PC-3 (cell line): ENCODE measurements at regions of chr14 and their contacts with region 1.

Region 1: DNA sequence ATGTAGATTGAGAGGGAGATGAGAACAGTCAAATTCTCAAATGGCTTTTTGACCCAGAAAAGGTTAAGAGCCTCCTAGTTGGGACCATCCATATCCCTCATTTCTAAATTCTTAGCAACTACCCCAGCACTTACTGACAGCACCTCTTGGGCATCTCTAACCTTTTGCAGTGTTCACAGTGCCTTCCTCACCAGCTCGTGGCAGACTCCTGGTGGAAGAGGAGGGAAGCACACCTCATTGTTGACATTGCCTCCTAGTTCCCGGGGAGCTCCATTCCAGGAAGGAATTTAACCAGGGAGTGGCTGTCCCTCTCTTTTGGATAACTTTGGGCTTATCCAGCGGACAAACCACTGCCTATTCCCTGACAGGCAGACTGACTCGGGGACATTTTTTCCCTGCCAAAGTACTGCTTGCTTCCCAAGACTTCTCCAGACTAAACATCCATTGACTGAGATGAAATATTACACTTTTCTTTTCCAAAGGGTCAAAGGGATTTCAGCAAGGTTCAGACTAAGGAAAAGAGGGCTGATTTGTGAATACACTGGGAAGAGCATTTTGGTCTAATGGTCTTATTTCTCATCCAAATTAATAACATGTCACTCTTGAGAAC is 9.0 kb upstream of the OR6J1 start:
- DNase-seq: peak; percentile 93
- ATAC-seq: peak; percentile 62
- H3K4me3 ChIP-seq: no peak overlapping the region
- H3K27ac ChIP-seq: no peak overlapping the region
- H3K4me1 ChIP-seq: peaks cover 37% of the 10 kb centered on the region
- H3K27me3 ChIP-seq: no peaks in the 10 kb centered on the region
- CTCF ChIP-seq: peak; percentile 92

Region 2: GRCh38 chr14:22010545-22011252 is 642.4 kb before region 1 on chr14:
- CTCF ChIA-PET with region 1: no interaction called
- POLR2A ChIA-PET with region 1: no interaction called
- intact Hi-C with region 1: no loop called
- DNase-seq: no peak
- ATAC-seq: no peak
- H3K4me3 ChIP-seq: no peak overlapping the region
- H3K27ac ChIP-seq: no peak overlapping the region
- H3K4me1 ChIP-seq: no peaks in the 10 kb centered on the region
- H3K27me3 ChIP-seq: peaks cover 27% of the 10 kb centered on the region; the same call in 1 of the 2 replicates
- CTCF ChIP-seq: no peak

Region 3: GRCh38 chr14:22386924-22387775 is 266.0 kb before region 1 on chr14:
- CTCF ChIA-PET with region 1: no interaction called
- POLR2A ChIA-PET with region 1: no interaction called
- intact Hi-C with region 1: loop called (anchors 5 kb)
- DNase-seq: peak; percentile 88
- ATAC-seq: no peak
- H3K4me3 ChIP-seq: no peak overlapping the region
- H3K27ac ChIP-seq: no peak overlapping the region
- H3K4me1 ChIP-seq: peaks cover 46% of the 10 kb centered on the region
- H3K27me3 ChIP-seq: no peaks in the 10 kb centered on the region
- CTCF ChIP-seq: peak; percentile 91

Region 4: DNA sequence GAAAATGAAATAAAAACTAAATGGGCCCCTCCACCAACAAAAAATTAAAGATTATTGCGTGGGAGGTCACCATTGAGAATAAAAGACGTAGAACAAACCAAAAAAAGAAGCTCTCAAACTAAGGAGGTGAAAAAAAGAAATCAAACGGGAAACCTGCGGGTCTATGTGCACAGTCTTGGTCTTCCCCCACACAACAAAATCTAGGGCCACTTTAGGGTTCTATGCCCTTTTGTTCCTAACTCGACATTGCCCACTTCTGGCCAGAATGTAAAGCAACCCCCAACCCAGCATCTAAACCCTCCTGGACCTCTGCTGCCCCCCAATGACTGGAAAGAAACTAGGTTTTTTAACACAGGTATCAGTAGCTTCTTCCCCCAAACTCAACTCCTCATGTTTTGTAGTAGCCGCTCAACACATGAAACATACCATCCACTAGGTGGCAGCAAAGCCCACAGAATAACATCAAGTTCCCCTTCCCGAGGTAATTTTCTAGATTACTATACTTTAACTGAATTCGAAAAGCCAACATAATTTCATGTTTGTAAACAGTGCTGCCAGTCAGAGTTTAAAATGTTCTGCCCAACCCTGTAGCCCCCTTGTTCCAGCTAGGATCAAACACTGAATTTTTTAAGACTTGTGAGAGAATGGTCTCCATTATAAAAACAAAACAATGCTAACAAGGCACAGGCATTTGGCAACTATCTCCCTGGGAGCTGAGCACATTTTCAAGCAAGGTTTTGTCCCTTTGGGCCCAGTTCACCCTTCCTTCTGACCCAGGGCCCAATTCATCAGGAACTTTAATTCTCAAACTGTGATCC is 82.8 kb before region 1 on chr14:
- CTCF ChIA-PET with region 1: interaction called, 54 read pairs
- POLR2A ChIA-PET with region 1: no interaction called
- intact Hi-C with region 1: loop called (anchors 1 kb)
- DNase-seq: peak; percentile 92
- ATAC-seq: peak; percentile 65
- H3K4me3 ChIP-seq: no peak overlapping the region
- H3K27ac ChIP-seq: no peak overlapping the region
- H3K4me1 ChIP-seq: peaks cover 5% of the 10 kb centered on the region
- H3K27me3 ChIP-seq: no peaks in the 10 kb centered on the region
- CTCF ChIP-seq: peak; percentile 97

Region 5: DNA sequence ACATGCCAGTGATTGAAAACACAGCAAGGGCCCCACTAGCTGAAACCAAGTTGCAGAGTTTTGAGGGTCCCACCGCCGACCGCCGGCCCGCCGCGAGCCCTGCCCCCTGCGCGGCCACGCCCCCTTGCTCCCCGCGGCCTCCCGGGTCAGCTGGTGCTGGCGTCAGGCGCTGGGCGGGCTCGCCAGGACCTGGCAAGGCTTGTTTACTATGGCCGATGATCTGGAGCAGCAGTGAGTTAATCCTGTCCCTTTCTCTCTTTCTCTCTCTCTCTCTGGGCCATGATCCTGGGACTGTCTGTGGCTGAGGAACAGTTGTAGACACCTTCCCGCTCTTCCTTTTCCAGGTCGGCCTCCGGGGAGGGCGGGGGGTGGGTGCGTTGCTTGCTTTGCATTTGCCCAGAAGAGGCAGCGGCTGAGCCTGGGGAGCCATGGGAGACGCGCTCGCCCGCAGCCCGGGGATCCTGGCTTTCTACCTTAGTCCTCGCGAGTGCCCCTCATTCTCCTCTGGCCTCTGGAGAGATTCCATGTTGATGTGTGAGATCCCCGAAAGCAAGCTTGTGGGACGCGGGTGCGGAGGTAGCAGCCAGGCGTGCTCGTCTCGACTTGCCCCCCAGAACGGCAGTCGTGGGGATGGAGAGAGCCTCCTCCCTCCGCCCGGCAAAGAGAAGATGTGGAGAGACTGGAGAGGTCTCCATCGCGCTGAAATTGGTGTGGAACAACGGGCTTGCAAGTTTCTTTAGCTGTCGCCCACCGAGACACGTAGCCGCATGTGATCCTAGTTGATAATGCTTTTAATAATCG is 54.8 kb before region 1 on chr14 and contains the start of gene ABHD4:
- CTCF ChIA-PET with region 1: interaction called, 10 read pairs
- POLR2A ChIA-PET with region 1: interaction called, 5 read pairs
- intact Hi-C with region 1: loop called (anchors 2 kb)
- DNase-seq: peak; percentile 61
- ATAC-seq: peak; percentile 82
- H3K4me3 ChIP-seq: peak within 1 kb of the TSS; percentile 89
- H3K27ac ChIP-seq: peak within 1 kb of the TSS; percentile 68
- H3K4me1 ChIP-seq: peaks cover 50% of the 10 kb centered on the region
- H3K27me3 ChIP-seq: no peaks in the 10 kb centered on the region
- CTCF ChIP-seq: no peak
- total RNA-seq, gene ABHD4: 9.1 and 9.6 TPM in 2 replicates

Region 6: DNA sequence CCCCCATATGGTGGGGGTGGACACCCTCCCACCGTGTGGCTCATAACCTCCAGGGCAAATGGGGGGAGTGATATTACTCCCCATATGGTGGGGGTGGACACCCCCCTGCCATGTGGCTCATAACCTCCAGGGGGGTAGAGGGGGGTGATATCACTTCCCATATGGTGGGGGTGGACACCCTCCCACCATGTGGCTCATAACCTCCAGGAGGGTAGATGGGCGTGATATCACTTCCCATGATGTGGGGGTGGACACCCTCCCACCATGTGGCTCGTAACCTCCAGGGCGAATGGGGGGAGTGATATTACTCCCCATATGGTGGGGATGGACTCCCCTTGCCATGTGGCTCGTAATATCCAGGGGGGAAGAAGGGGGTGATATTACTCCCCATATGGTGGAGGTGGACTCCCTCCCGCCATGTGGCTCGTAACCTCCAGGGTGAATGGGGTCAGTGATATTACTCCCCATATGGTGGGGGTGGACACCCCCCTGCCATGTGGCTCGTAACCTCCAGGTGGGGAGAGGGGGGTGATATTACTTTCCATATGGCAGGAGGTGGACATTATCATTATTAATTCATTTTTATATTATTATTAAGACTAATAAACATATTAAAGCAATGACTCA is 62.2 kb after region 1 on chr14:
- CTCF ChIA-PET with region 1: interaction called, 10 read pairs
- POLR2A ChIA-PET with region 1: no interaction called
- intact Hi-C with region 1: loop called (anchors 5 kb)
- DNase-seq: no peak
- ATAC-seq: no peak
- H3K4me3 ChIP-seq: no peak overlapping the region
- H3K27ac ChIP-seq: no peak overlapping the region
- H3K4me1 ChIP-seq: peaks cover 12% of the 10 kb centered on the region
- H3K27me3 ChIP-seq: peaks cover 17% of the 10 kb centered on the region
- CTCF ChIP-seq: no peak

Region 7: GRCh38 chr14:22781586-22781991 is 128.5 kb after region 1 on chr14:
- CTCF ChIA-PET with region 1: interaction called, 10 read pairs
- POLR2A ChIA-PET with region 1: no interaction called
- intact Hi-C with region 1: no loop called
- DNase-seq: peak; percentile 45
- ATAC-seq: peak; percentile 68; the same call in 1 of the 2 replicates
- H3K4me3 ChIP-seq: no peak overlapping the region
- H3K27ac ChIP-seq: no peak overlapping the region
- H3K4me1 ChIP-seq: 0 out of 2 replicates have a peak, but pooled peaks cover 4% of the 10 kb centered on the region
- H3K27me3 ChIP-seq: no peaks in the 10 kb centered on the region
- CTCF ChIP-seq: no peak

Region 8: DNA sequence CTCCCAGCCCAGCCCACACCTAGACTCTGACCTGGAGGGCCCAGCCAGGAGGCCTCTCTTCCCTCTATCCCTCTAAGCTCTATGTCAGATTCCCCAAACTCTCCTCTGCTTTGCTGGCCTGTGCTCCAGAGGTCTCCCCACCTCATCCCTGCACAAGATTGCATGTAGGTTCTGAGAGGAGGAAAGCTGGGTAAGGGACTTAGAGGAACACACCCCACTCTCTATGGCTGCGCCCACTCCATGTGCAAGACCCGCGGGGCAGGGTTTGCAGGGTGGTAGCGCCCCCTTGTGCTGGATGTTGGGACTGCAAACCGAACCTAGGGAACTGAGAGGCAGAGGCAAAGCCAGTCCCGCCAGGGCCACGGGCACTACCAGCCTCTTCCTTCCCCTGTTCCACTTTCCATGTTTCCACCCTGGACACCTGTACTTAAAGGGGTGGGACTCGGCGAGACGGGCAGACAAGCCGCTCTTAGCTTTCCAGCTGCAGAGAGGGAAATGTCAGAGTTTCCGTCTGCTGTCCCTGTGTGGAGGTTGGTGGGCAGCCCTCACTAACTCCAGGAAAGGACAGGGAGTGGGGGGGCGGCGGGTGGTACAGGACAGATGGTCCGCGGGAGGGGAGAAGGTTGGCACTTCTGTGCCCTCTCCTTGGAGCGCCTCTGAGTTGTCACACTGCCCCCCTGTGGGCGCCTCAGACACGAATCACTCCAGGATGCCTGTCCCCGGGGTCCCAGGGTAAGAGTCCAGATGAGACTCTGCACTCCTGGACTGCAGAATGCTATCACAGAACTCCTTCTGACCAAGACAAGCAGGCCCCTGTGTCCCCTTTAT is 200.0 kb after region 1 on chr14:
- CTCF ChIA-PET with region 1: interaction called, 4 read pairs
- POLR2A ChIA-PET with region 1: no interaction called
- intact Hi-C with region 1: loop called (anchors 1 kb)
- DNase-seq: peak; percentile 93
- ATAC-seq: peak; percentile 68
- H3K4me3 ChIP-seq: peak overlapping the region; percentile 68
- H3K27ac ChIP-seq: peak overlapping the region; percentile 97
- H3K4me1 ChIP-seq: peaks cover 40% of the 10 kb centered on the region
- H3K27me3 ChIP-seq: no peaks in the 10 kb centered on the region
- CTCF ChIP-seq: peak; percentile 94

Region 9: GRCh38 chr14:23539248-23540140 is 886.4 kb after region 1 on chr14:
- CTCF ChIA-PET with region 1: no interaction called
- POLR2A ChIA-PET with region 1: no interaction called
- intact Hi-C with region 1: no loop called
- DNase-seq: peak; percentile 67
- ATAC-seq: peak; percentile 63; the same call in 1 of the 2 replicates
- H3K4me3 ChIP-seq: no peak overlapping the region
- H3K27ac ChIP-seq: no peak overlapping the region
- H3K4me1 ChIP-seq: no peaks in the 10 kb centered on the region
- H3K27me3 ChIP-seq: no peaks in the 10 kb centered on the region
- CTCF ChIP-seq: peak; percentile 73